ENCODE measurements at regions of chr20 and their contacts with region 1.

Region 1: GRCh38 chr20:31605031-31605901 is at the start of gene ID1:
- DNase-seq: peak; percentile 95 to 98
- H3K4me3 ChIP-seq: peak within 1 kb of the TSS; percentile 72
- H3K4me1 ChIP-seq: peaks cover 34% of the 10 kb centered on the region
- H3K27me3 ChIP-seq: no peaks in the 10 kb centered on the region

Region 2: GRCh38 chr20:31572701-31573554 is 32.3 kb before region 1 on chr20:
- in situ Hi-C with region 1: loop called (anchors 5 kb)
- DNase-seq: peak; percentile 92 to 97
- H3K4me3 ChIP-seq: peak overlapping the region; percentile 48
- H3K4me1 ChIP-seq: peaks cover 23% of the 10 kb centered on the region
- H3K27me3 ChIP-seq: no peaks in the 10 kb centered on the region

Measured in HAP-1 (cell line).